Aorta (tissue), 5 donors: ENCODE measurements at regions of chr18 and their contacts with region 1.

Region 1: GRCh38 chr18:51110073-51110803 is 80.2 kb downstream of the SMAD4 start:
- DNase-seq: peak; percentile 57 to 90
- ATAC-seq: peak; percentile 83
- H3K4me3 ChIP-seq: no peak overlapping the region
- H3K27ac ChIP-seq: no peak overlapping the region
- H3K4me1 ChIP-seq: no peaks in the 10 kb centered on the region
- H3K27me3 ChIP-seq: no peaks in the 10 kb centered on the region

Region 2: DNA sequence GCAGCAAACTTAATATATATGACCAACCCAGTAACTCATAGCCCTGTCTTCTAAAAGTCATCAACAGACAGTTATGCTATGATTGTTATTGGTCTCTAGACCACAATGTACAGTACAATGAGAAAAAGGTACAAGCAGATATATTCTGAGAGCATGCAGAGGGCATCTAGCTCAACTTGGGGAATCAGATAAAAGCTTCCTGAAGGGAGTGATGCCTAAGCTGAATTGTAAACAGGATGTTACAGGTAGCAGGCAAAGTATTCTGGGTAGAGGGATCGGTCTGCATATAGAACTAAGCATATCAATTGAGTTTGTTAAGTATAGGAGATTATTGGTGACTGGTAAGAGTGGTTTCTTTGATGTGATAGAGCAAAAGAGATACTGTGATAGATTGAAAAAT is 201.0 kb before region 1 on chr18:
- intact Hi-C with region 1: no loop called
- DNase-seq: no peak
- ATAC-seq: no peak
- H3K4me3 ChIP-seq: no peak overlapping the region
- H3K27ac ChIP-seq: no peak overlapping the region
- H3K4me1 ChIP-seq: no peaks in the 10 kb centered on the region
- H3K27me3 ChIP-seq: no peaks in the 10 kb centered on the region

Region 3: DNA sequence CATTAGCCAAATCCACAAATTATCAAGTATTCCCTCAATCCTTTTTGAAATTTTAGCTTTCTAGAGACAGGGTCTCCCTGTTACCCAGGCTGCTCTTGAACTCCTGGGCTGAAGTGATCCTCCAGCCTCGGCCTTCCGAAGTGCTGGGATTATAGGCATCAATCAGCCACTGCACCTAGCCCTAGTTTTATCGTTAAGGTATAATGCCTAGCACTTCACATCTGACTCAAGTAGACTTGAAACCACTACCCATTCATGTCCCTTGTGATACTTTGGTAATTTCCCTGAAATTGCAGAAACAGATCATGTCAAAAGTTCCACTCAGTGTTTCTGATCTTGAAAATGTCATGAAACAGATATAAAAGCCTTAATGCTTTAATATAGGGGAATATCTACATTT is 61.0 kb after region 1 on chr18:
- intact Hi-C with region 1: no loop called
- DNase-seq: no peak
- ATAC-seq: no peak
- H3K4me3 ChIP-seq: no peak overlapping the region
- H3K27ac ChIP-seq: no peak overlapping the region
- H3K4me1 ChIP-seq: no peaks in the 10 kb centered on the region
- H3K27me3 ChIP-seq: no peaks in the 10 kb centered on the region

Region 4: DNA sequence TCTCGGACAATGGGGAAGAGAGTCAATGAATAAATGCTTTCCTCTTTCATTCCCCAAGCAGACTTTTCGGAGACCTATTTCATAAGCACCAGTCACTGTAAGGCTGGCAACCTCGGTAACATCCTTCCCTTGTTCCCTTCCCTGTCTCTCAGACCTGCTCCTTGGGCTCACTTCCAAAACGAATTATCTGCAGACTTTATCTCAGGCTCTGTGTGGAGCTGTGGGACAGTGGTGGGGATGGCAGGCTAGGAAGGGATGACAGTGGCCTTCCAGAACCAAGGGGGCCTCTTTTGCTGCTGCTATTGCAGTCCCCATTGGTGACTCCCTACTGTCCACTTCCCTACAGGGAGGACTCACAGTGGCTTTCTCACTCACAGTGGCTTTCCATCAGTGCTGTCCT is 272.9 kb after region 1 on chr18:
- intact Hi-C with region 1: loop called in 1 of 2 experiments (anchors 10 kb)
- DNase-seq: no peak
- ATAC-seq: peak; percentile 26
- H3K4me3 ChIP-seq: no peak overlapping the region
- H3K27ac ChIP-seq: no peak overlapping the region
- H3K4me1 ChIP-seq: no peaks in the 10 kb centered on the region
- H3K27me3 ChIP-seq: no peaks in the 10 kb centered on the region

Region 5: GRCh38 chr18:51802569-51803428 is 692.6 kb after region 1 on chr18:
- intact Hi-C with region 1: no loop called
- DNase-seq: no peak
- ATAC-seq: no peak
- H3K4me3 ChIP-seq: no peak overlapping the region
- H3K27ac ChIP-seq: no peak overlapping the region
- H3K4me1 ChIP-seq: no peaks in the 10 kb centered on the region
- H3K27me3 ChIP-seq: no peaks in the 10 kb centered on the region